AG04449 (cell line): ENCODE measurements at regions of chr6 and their contacts with region 1.

Region 1: DNA sequence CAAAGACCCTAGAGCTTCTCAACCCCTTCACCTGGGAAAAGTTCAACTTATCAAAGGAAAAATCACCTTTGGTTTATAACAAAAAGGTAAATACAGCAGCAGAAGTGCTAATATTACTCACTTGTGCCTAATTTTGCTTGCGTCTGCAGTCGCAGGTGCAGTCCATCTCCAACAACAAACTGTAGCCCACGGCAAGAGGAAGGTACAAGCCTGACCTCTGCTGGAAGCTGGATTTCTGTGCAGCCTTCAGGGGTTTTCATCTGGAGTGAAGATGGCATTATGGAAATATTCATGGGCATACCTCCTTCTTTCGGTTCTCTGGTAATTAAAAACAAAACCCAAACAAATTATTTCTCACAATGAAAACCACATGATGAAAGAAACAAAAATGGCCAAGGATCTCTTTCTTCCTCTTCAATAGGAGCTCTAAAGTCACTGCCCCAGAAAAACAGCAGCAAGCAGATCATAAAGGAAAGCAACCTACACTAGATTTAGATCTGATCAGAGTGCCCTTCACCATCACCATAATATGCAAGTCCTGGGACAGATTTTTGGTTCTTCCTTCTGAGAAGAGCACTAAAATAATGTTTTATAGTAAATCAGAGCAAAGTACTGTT is 7.8 kb downstream of the UBE3D start:
- DNase-seq: no peak
- H3K4me3 ChIP-seq: no peak overlapping the region
- CTCF ChIP-seq: peak; percentile 80

Region 2: DNA sequence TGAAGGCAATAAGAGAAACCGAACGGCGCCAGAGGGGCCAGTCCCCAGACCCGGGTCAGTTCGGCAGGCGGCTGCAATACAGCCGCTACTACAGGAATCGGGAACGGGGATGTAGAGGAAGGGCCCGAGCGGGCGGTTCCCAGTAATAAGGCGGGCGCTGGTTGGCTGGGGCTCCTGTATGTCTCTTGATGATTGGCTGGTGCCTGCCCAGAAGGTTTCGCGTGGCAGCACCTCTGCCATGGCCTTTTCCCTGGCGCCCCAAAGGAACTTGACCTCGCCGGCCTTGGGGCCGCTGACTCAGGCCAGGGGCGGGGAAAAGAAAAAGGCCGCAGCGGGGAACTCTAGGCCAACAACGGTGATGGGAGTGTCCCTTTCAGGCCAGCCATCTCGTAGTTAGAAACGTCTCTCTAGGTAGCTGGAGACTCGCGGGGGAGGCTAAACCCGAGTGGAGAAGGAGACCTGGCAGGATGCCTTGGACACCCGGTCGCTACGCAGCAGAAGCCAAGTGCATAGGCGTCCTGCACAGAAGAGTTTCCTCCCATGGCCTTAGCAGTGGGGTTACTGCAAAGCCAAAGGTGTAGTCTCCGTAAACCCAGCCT is 810.1 kb before region 1 on chr6 and contains the start of gene IBTK:
- CTCF ChIA-PET with region 1: interaction called, 65 read pairs
- POLR2A ChIA-PET with region 1: no interaction called
- DNase-seq: no peak
- H3K4me3 ChIP-seq: peak within 1 kb of the TSS; percentile 77
- CTCF ChIP-seq: no peak

Region 3: GRCh38 chr6:82257088-82257772 is 800.6 kb before region 1 on chr6:
- CTCF ChIA-PET with region 1: interaction called, 65 read pairs
- POLR2A ChIA-PET with region 1: no interaction called
- DNase-seq: no peak
- H3K4me3 ChIP-seq: no peak overlapping the region
- CTCF ChIP-seq: no peak

Region 4: DNA sequence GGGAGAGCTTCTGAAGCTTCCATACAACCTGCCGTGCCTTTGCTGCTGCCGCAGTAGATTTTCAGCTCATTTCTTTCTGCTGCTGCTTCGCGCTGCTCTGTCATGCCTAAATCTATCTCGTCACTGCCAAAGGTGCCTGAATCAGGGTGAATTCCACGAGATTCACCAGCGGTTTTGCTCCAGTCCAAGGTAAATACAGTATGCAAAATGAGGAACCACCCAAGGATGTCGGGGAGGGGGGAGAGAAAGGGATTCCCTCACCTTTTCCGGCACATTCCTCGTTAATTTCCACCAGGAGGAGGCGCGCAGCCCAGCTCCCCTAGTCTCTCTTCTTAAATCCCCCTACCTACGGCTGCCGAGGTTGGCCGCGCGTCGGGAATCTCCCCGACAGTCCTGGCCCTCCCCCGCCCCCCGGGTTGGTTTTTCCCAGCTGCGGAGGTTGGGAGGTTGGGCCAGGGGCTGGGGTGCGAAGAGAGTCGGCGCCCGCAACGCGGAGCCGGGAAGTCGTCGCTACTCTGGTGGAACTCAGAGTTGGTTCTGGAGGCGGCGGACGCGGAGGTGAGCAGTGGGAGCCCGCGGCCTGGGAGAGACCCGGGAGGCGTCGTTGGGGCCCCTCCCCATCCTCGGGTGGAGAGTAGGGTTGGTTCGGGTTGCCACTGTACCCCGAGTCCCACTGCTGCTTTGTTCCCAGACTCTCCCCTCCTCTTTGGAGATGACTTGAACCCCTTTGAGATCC is 694.3 kb before region 1 on chr6 and contains the start of gene TPBG:
- CTCF ChIA-PET with region 1: interaction called, 10 read pairs
- POLR2A ChIA-PET with region 1: interaction called, 4 read pairs
- DNase-seq: no peak
- H3K4me3 ChIP-seq: peak within 1 kb of the TSS; percentile 84
- CTCF ChIP-seq: peak; percentile 37